BJ (cell line): ENCODE measurements at regions of chr5 and their contacts with region 1.

Region 1: DNA sequence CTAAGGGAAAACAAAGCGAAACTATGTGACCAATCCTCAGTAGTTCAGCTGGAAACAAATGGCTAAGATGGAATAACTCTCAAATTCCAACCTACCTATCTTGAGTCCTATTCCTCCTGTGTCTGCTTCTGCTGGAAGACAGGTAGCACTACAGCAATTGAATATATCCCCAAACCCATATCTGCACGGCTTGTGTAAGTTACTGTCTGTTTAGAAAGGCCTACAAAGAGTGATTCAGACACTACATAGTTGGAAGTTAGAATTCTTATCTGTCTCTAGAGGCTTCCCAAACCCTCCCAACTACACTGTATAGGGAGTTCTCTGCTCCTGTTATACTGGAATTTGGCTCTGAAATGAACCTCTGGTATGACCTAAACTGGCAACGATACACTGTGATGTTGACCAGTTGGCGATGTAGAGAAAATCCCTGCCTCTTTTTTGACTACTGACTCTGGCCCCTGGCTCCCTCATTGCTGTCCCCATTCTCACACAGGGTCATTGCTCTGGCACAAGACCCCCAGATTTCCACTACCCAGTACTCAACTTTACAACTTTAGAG is 22.6 kb upstream of the NADK2 start:
- DNase-seq: no peak
- H3K4me3 ChIP-seq: no peak overlapping the region
- H3K27me3 ChIP-seq: no peaks in the 10 kb centered on the region
- CTCF ChIP-seq: no peak

Region 2: DNA sequence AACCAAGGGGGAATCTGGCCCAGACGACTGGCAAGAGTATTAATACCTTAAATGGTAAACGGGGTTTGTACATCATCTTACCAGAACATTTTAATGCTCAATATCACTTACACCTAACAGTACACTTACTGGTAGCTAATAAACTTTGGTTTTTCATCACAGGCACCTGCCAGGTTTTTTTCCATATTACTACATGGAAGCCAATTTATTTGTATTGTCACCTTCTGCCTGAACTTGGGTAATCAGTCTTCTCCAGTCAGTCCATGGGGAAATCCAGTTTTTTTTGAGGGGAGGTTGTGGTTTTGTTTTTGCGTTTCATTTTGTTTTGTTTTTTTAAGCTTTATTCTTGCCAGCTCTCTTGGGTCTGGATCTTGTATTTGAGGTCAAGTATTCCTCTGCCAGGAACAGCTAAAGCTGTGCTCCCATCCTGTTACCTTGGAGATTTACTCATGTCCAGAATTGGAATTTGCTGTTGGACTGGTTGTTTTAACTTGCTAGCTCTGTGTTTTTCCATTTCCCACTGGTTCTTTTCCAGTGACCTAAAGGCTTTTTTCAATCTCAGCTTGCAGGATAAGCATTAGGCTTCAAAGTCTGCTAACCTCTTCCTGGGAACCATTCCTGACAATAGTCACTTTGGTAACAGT is 11.4 kb before region 1 on chr5:
- CTCF ChIA-PET with region 1: interaction called, 15 read pairs
- POLR2A ChIA-PET with region 1: no interaction called
- DNase-seq: no peak
- H3K4me3 ChIP-seq: no peak overlapping the region
- H3K27me3 ChIP-seq: no peaks in the 10 kb centered on the region
- CTCF ChIP-seq: no peak

Region 3: GRCh38 chr5:36305571-36306326 is 41.5 kb after region 1 on chr5:
- CTCF ChIA-PET with region 1: interaction called, 87 read pairs
- POLR2A ChIA-PET with region 1: no interaction called
- DNase-seq: no peak
- H3K4me3 ChIP-seq: no peak overlapping the region
- H3K27me3 ChIP-seq: no peaks in the 10 kb centered on the region; the same call in 1 of the 2 replicates
- CTCF ChIP-seq: peak; percentile 80

Region 4: DNA sequence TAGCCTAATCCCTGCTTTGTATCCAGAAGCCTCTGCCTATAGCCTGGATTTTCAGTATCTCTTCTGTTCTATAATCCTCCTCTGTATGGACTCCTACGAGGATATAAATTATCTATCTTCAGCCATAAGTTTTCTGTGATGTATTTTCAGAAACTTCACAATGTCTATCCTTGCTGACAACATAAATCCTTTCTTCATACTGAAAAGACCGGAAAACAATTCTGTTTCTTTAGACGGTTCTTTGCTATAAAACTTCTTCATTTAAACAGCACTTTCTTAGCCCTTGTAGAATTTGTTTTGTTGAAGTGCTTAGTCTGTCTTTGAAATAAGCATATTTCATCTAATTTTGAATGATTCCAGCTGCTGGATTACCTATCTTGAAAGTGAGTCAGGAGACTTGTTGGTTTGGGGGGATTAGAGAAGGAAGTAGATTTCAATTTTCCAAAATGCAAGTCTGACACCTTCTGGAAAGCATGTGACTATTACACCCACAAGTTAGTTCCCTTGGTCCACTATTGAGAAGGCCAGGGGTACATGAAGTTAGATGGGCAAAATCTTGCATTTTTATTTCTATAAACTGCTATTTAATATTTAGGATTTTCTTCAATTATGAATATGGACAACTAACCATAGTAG is 133.7 kb after region 1 on chr5:
- CTCF ChIA-PET with region 1: interaction called, 94 read pairs
- POLR2A ChIA-PET with region 1: no interaction called
- DNase-seq: no peak
- H3K4me3 ChIP-seq: no peak overlapping the region
- H3K27me3 ChIP-seq: peaks cover 2% of the 10 kb centered on the region; the same call in 1 of the 2 replicates
- CTCF ChIP-seq: peak; percentile 42

Region 5: GRCh38 chr5:36690041-36690961 is 426.0 kb after region 1 on chr5:
- CTCF ChIA-PET with region 1: interaction called, 10 read pairs
- POLR2A ChIA-PET with region 1: no interaction called
- DNase-seq: no peak
- H3K4me3 ChIP-seq: peak overlapping the region; percentile 48
- H3K27me3 ChIP-seq: no peaks in the 10 kb centered on the region
- CTCF ChIP-seq: peak; percentile 96